Naive thymus-derived CD4-positive, alpha-beta T cell (primary cell): ENCODE measurements at regions of chr6 and their contacts with region 1.

Region 1: GRCh38 chr6:125995972-125996580 is 9.7 kb downstream of the TRMT11 start:
- DNase-seq: peak; percentile 51 to 78 (median 72)
- ATAC-seq: peak; percentile 99
- H3K4me3 ChIP-seq: peak overlapping the region; percentile 42
- H3K4me3 Mint-ChIP-seq: peak overlapping the region; percentile 66 to 87 (median 77)
- H3K27ac ChIP-seq: no peak overlapping the region
- H3K27ac Mint-ChIP-seq: peak overlapping the region in 6 of 9 donors; percentile 8 to 63 (median 24)
- H3K4me1 ChIP-seq: no peaks in the 10 kb centered on the region
- H3K4me1 Mint-ChIP-seq: peaks cover 10 to 44% (median 41%) of the 10 kb centered on the region in 7 donors
- H3K27me3 ChIP-seq: no peaks in the 10 kb centered on the region
- H3K27me3 Mint-ChIP-seq: no peaks in the 10 kb centered on the region

Region 2: DNA sequence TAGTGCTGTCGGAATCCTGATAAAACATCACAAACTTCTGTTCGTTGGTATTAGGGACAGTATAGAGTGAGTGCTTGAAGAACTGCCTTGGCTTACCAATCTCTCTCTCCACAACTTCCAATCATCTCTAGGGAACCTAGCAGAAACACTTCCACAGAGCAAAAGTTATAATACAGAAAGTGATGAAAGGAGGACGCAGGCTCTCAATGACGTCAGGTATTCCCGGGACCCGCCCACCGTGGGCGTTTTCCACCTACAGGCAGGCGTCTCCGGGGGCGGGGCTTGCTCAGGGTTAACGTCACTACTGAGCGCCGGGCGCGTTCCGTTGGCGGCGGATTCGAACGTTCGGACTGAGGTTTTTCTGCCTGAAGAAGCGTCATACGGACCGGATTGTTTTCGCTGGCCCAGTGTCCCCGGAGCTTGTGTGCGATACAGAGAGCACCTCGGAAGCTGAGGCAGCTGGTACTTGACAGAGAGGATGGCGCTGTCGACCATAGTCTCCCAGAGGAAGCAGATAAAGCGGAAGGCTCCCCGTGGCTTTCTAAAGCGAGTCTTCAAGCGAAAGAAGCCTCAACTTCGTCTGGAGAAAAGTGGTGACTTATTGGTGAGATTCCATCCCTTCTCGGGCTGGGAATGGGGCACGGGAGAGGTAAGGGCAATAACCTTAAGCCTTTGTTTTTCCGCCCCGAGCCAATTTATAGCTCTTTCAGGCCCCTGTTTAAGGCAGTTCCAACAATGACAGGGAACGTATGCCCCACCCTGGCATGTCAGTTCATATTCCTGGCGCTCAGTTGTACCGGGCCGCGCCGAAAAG is 343.9 kb after region 1 on chr6 and contains the start of gene CENPW:
- CTCF ChIA-PET with region 1: no interaction called
- POLR2A ChIA-PET with region 1: no interaction called
- intact Hi-C with region 1: loop called in 1 of 2 experiments (anchors 2 kb)
- DNase-seq: peak; percentile 84 to 96 (median 87)
- ATAC-seq: peak; percentile 98
- H3K4me3 ChIP-seq: peak within 1 kb of the TSS; percentile 80
- H3K4me3 Mint-ChIP-seq: no peak within 1 kb of the TSS
- H3K27ac ChIP-seq: peak within 1 kb of the TSS; percentile 33
- H3K27ac Mint-ChIP-seq: no peak within 1 kb of the TSS
- H3K4me1 ChIP-seq: peaks cover 6 to 12% of the 10 kb centered on the region in 2 donors
- H3K4me1 Mint-ChIP-seq: peaks cover 5 to 21% (median 12%) of the 10 kb centered on the region in 7 donors
- H3K27me3 ChIP-seq: no peaks in the 10 kb centered on the region
- H3K27me3 Mint-ChIP-seq: no peaks in the 10 kb centered on the region
- total RNA-seq, gene CENPW: 1.2 to 37.1 (median 3.9) TPM

Region 3: GRCh38 chr6:126657561-126658175 is 661.6 kb after region 1 on chr6:
- CTCF ChIA-PET with region 1: no interaction called
- POLR2A ChIA-PET with region 1: no interaction called
- intact Hi-C with region 1: loop called in 1 of 2 experiments (anchors 1 kb)
- DNase-seq: no peak
- ATAC-seq: no peak
- H3K4me3 ChIP-seq: no peak overlapping the region
- H3K4me3 Mint-ChIP-seq: no peak overlapping the region
- H3K27ac ChIP-seq: no peak overlapping the region
- H3K27ac Mint-ChIP-seq: no peak overlapping the region
- H3K4me1 ChIP-seq: no peaks in the 10 kb centered on the region
- H3K4me1 Mint-ChIP-seq: no peaks in the 10 kb centered on the region
- H3K27me3 ChIP-seq: no peaks in the 10 kb centered on the region
- H3K27me3 Mint-ChIP-seq: no peaks in the 10 kb centered on the region

Region 4: GRCh38 chr6:127186889-127187288 is 1190.8 kb after region 1 on chr6:
- CTCF ChIA-PET with region 1: no interaction called
- POLR2A ChIA-PET with region 1: no interaction called
- intact Hi-C with region 1: loop called in 1 of 2 experiments (anchors 1 kb)
- DNase-seq: peak; percentile 1 to 60 (median 22)
- ATAC-seq: peak; percentile 63
- H3K4me3 ChIP-seq: no peak overlapping the region
- H3K4me3 Mint-ChIP-seq: no peak overlapping the region
- H3K27ac ChIP-seq: no peak overlapping the region
- H3K27ac Mint-ChIP-seq: no peak overlapping the region
- H3K4me1 ChIP-seq: no peaks in the 10 kb centered on the region
- H3K4me1 Mint-ChIP-seq: no peaks in the 10 kb centered on the region
- H3K27me3 ChIP-seq: no peaks in the 10 kb centered on the region
- H3K27me3 Mint-ChIP-seq: peaks cover 4 to 14% (median 8%) of the 10 kb centered on the region in 5 donors

Region 5: GRCh38 chr6:127420556-127420955 is 1424.5 kb after region 1 on chr6:
- CTCF ChIA-PET with region 1: no interaction called
- POLR2A ChIA-PET with region 1: no interaction called
- intact Hi-C with region 1: loop called in 1 of 2 experiments (anchors 1 kb)
- DNase-seq: peak in 8 of 9 donors; percentile 27 to 75 (median 56)
- ATAC-seq: peak; percentile 99
- H3K4me3 ChIP-seq: no peak overlapping the region
- H3K4me3 Mint-ChIP-seq: no peak overlapping the region
- H3K27ac ChIP-seq: no peak overlapping the region
- H3K27ac Mint-ChIP-seq: peak overlapping the region in 6 of 9 donors; percentile 5 to 81 (median 16)
- H3K4me1 ChIP-seq: no peaks in the 10 kb centered on the region
- H3K4me1 Mint-ChIP-seq: peaks cover 0 to 11% (median 5%) of the 10 kb centered on the region in 7 donors
- H3K27me3 ChIP-seq: no peaks in the 10 kb centered on the region
- H3K27me3 Mint-ChIP-seq: no peaks in the 10 kb centered on the region